CD8-positive, alpha-beta T cell (primary cell): ENCODE measurements at regions of chr5 and their contacts with region 1.

Region 1: GRCh38 chr5:108753877-108754276 is 6.2 kb downstream of the FER start:
- DNase-seq: no peak
- ATAC-seq: no peak
- H3K4me3 ChIP-seq: no peak overlapping the region
- H3K4me3 Mint-ChIP-seq: no peak overlapping the region
- H3K27ac ChIP-seq: no peak overlapping the region
- H3K27ac Mint-ChIP-seq: no peak overlapping the region
- H3K4me1 ChIP-seq: no peaks in the 10 kb centered on the region
- H3K4me1 Mint-ChIP-seq: peaks cover 6% of the 10 kb centered on the region
- H3K27me3 ChIP-seq: no peaks in the 10 kb centered on the region
- H3K27me3 Mint-ChIP-seq: no peaks in the 10 kb centered on the region
- CTCF ChIP-seq: no peak

Region 2: GRCh38 chr5:108715408-108715807 is 38.5 kb before region 1 on chr5:
- CTCF ChIA-PET with region 1: no interaction called
- POLR2A ChIA-PET with region 1: no interaction called
- intact Hi-C with region 1: loop called in 1 of 2 experiments (anchors 5 kb)
- DNase-seq: no peak
- ATAC-seq: no peak
- H3K4me3 ChIP-seq: no peak overlapping the region
- H3K4me3 Mint-ChIP-seq: no peak overlapping the region
- H3K27ac ChIP-seq: no peak overlapping the region
- H3K27ac Mint-ChIP-seq: no peak overlapping the region
- H3K4me1 ChIP-seq: no peaks in the 10 kb centered on the region
- H3K4me1 Mint-ChIP-seq: no peaks in the 10 kb centered on the region
- H3K27me3 ChIP-seq: peaks cover 0 to 4% of the 10 kb centered on the region in 2 experiments
- H3K27me3 Mint-ChIP-seq: peaks cover 4% of the 10 kb centered on the region
- CTCF ChIP-seq: no peak

Region 3: DNA sequence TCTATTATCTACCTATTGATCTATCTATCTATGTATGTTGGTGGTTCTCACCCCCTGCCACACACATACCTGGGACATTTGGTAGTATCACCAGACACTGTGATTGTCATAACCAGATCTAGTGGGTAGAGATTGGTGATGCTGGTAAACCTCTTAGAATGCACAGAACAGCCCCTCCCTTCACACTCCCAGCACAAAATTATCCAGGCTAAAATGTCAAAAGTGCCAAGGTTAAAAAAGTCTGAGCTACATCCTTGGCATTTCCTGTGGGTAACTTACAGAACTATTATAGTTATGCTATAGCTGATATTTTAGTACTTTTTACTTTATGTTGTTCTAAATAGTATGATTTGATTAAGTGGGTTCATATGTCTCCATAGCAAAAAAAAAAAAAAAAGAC is 144.8 kb after region 1 on chr5:
- CTCF ChIA-PET with region 1: no interaction called
- POLR2A ChIA-PET with region 1: no interaction called
- intact Hi-C with region 1: loop called in 1 of 2 experiments (anchors 10 kb)
- DNase-seq: no peak
- ATAC-seq: no peak
- H3K4me3 ChIP-seq: no peak overlapping the region
- H3K4me3 Mint-ChIP-seq: no peak overlapping the region
- H3K27ac ChIP-seq: no peak overlapping the region
- H3K27ac Mint-ChIP-seq: no peak overlapping the region
- H3K4me1 ChIP-seq: no peaks in the 10 kb centered on the region
- H3K4me1 Mint-ChIP-seq: no peaks in the 10 kb centered on the region
- H3K27me3 ChIP-seq: no peaks in the 10 kb centered on the region
- H3K27me3 Mint-ChIP-seq: no peaks in the 10 kb centered on the region
- CTCF ChIP-seq: no peak

Region 4: DNA sequence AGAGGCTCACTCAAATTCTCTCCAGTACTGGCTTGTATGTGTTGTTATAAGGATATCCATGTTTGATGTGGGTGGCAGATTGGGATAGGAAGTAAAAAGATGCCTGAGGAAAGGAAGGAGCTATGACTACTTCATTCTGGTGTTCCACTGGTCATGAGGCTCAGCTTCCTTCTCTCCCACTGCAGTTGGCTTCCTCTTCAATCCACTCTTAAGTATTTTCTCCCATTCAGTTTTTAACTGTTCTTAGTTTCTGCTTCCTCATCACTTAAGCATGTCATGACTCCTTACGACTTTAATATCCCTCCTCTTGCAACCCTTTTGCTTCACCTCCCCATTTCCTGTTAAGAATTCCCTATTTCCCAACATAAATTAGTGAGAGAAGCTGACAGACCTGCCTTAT is 574.7 kb after region 1 on chr5:
- CTCF ChIA-PET with region 1: no interaction called
- POLR2A ChIA-PET with region 1: no interaction called
- intact Hi-C with region 1: no loop called
- DNase-seq: no peak
- ATAC-seq: no peak
- H3K4me3 ChIP-seq: no peak overlapping the region
- H3K4me3 Mint-ChIP-seq: no peak overlapping the region
- H3K27ac ChIP-seq: no peak overlapping the region
- H3K27ac Mint-ChIP-seq: no peak overlapping the region
- H3K4me1 ChIP-seq: no peaks in the 10 kb centered on the region
- H3K4me1 Mint-ChIP-seq: no peaks in the 10 kb centered on the region
- H3K27me3 ChIP-seq: no peaks in the 10 kb centered on the region
- H3K27me3 Mint-ChIP-seq: no peaks in the 10 kb centered on the region
- CTCF ChIP-seq: no peak